ENCODE measurements at regions of chr9 and their contacts with region 1.

Region 1: GRCh38 chr9:94166237-94166963 is 82.1 kb downstream of the PTPDC1 start:
- DNase-seq: peak; percentile 97
- ATAC-seq: peak; percentile 64
- H3K4me3 ChIP-seq: peak overlapping the region; percentile 99
- H3K27ac ChIP-seq: peak overlapping the region; percentile 95
- H3K4me1 ChIP-seq: peaks cover 17% of the 10 kb centered on the region; the same call in 1 of the 2 replicates
- H3K27me3 ChIP-seq: no peaks in the 10 kb centered on the region
- CTCF ChIP-seq: no peak

Region 2: DNA sequence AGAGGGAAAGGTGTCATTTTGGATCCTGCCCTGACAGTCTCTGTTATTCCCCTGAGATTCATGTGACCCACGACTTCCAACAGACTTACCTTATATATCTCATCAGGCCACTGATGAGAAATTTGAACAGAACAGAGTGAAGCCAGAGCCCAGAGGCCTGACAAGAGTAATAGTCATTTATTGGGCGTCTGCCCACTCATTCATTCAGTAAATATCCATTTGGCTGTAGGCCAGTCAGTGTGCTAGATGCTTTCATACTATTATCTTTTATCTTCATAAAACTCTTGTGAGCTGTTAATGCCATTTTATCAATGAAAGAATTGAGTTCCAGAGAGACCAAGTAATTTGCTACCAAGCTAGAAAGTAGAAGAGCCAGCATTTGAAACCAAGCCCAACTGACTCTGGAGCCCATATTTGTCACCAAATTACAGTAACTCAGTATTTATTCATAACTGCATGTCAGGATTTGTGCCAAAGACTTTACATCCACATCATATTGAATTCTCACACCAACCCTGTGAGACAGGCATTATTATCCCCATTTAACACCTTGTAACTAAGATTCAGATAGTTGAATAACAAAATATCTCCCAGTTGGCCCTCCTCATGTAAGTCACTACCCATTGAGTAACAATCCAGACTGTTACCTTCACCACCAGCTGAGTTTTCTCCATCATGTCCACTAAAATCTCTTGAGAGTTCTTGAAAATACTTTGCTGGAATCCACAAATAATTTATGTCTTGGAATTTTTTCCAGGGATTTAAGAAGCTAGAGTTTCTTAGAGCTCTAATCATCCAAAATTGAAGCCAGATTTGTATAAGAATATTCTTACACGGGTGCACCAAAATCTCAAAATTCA is 79.7 kb before region 1 on chr9:
- CTCF ChIA-PET with region 1: no interaction called
- POLR2A ChIA-PET with region 1: interaction called, 6 read pairs
- intact Hi-C with region 1: loop called (anchors 5 kb)
- DNase-seq: peak; percentile 91
- ATAC-seq: peak; percentile 89
- H3K4me3 ChIP-seq: no peak overlapping the region
- H3K27ac ChIP-seq: 0 out of 2 replicates have a peak overlapping the region, but pooled peaks have one; percentile 27
- H3K4me1 ChIP-seq: peaks cover 16% of the 10 kb centered on the region
- H3K27me3 ChIP-seq: no peaks in the 10 kb centered on the region
- CTCF ChIP-seq: no peak

Region 3: GRCh38 chr9:94139672-94140417 is 26.6 kb before region 1 on chr9:
- CTCF ChIA-PET with region 1: no interaction called
- POLR2A ChIA-PET with region 1: no interaction called
- intact Hi-C with region 1: loop called (anchors 2 kb)
- DNase-seq: peak; percentile 89
- ATAC-seq: peak; percentile 76
- H3K4me3 ChIP-seq: peak overlapping the region; percentile 59
- H3K27ac ChIP-seq: peak overlapping the region; percentile 98
- H3K4me1 ChIP-seq: peaks cover 27% of the 10 kb centered on the region
- H3K27me3 ChIP-seq: no peaks in the 10 kb centered on the region
- CTCF ChIP-seq: no peak

Region 4: DNA sequence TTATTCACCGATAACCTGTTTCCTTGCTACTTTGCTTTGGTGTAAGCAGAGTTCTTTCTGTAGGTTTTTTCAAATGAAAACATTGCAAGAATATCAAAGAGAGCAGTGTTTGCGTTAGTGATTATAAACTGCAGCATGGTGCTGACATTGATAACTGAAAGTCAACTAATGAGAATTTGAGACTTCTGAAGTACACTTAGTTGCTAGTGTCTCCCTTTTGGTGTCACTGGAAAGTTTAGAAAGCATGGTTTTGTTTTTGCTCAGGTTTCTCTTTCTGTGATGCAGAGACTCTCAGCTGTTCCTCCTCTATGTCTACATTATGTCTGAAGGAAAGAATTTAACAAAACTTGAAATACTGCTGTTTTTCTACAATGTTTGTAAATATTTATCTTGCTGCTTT is 12.5 kb after region 1 on chr9:
- CTCF ChIA-PET with region 1: no interaction called
- POLR2A ChIA-PET with region 1: interaction called, 12 read pairs
- intact Hi-C with region 1: no loop called
- DNase-seq: no peak
- ATAC-seq: no peak
- H3K4me3 ChIP-seq: no peak overlapping the region
- H3K27ac ChIP-seq: no peak overlapping the region
- H3K4me1 ChIP-seq: peaks cover 4% of the 10 kb centered on the region; the same call in 1 of the 2 replicates
- H3K27me3 ChIP-seq: no peaks in the 10 kb centered on the region
- CTCF ChIP-seq: no peak